Right ventricle myocardium inferior (tissue), 1 donor: ENCODE measurements at regions of chr14 and their contacts with region 1.

Region 1: DNA sequence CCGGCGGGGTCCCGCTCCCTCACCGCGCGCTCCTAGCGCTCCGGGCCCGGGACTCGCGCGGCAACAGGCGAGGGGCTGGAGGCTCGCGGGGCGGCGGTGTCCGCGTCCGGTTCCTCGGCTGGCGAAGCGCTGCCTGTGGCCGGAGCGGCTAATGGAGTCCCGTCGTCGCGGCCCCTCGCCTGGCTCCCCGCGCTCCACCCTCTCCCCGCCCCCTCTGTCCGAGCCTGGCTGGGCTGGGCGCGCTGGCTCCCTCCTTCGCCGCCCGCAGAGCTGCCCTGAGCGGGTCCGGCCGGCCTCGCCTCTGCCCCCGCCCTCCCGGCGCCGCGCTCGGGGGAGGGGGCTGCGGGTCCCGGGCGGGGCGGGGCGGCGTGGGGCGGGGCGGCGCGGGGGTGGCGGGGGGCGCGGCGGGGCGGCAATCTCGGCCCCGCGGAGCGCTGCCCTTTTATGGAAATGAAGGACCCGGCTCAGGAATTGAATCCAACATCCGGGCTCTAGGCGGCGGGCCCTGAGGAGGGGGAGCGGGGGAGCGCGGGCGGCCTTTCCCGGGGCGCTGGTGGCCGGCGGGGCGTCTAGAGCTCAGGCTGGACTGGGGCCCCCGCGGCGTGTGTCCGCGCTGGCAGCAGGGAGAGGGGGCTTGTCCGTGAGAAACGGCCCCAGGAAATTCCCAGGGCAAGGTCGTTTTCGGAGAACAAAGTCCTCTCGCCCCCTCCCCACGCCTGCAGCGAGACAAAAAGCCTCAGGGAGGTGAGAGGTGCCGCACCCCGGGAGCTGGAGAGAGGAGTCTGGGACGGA is at the start of gene FERMT2:
- DNase-seq: peak; percentile 92
- ATAC-seq: peak; percentile 96
- total RNA-seq, gene FERMT2: 127 TPM

Region 2: DNA sequence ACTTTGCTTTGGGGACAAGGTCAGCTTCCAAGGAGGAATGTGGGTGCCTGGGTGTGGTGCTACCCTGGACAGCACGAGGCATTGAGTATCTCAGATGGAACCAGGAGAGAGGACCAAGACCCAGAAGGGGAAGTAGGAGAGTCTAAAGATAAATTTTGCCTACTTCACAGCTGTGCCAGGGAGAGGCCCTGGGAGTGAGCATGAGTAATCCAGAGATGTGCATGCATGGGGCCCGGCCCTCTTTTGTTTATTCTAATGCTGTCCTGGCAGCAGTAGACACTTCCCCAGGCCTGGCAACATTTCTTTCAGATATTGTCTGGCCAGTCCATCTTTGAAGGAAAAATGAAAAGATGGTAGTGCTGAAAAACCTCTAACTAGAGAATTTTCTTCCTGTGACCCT is 110.2 kb before region 1 on chr14:
- intact Hi-C with region 1: loop called (anchors 5 kb)
- DNase-seq: peak; percentile 73
- ATAC-seq: peak; percentile 58

Region 3: GRCh38 chr14:52877628-52878027 is 73.5 kb before region 1 on chr14:
- intact Hi-C with region 1: loop called (anchors 2 kb)
- DNase-seq: no peak
- ATAC-seq: peak; percentile 47

Region 4: DNA sequence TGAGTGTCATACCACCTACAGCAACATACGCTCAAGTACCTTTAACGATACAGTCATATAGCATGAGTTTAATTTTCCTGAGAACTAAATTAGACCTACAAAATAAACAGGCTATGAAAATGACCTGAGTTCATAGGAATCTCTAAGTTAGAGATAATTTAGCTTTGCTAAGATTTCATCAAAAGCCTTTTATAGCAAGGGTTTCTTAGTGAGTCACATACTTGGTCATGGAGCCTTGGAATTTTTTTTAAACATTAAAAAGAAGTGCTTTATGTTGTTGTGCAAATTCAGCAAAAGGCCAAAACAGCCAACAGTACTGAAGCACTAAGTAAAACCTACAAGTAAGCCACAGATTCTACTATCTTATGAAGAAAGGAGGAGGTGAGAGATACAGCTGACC is 93.4 kb after region 1 on chr14:
- intact Hi-C with region 1: loop called (anchors 5 kb)
- DNase-seq: no peak
- ATAC-seq: no peak